CD8-positive, alpha-beta T cell (primary cell): ENCODE measurements at regions of chrX and their contacts with region 1.

Region 1: DNA sequence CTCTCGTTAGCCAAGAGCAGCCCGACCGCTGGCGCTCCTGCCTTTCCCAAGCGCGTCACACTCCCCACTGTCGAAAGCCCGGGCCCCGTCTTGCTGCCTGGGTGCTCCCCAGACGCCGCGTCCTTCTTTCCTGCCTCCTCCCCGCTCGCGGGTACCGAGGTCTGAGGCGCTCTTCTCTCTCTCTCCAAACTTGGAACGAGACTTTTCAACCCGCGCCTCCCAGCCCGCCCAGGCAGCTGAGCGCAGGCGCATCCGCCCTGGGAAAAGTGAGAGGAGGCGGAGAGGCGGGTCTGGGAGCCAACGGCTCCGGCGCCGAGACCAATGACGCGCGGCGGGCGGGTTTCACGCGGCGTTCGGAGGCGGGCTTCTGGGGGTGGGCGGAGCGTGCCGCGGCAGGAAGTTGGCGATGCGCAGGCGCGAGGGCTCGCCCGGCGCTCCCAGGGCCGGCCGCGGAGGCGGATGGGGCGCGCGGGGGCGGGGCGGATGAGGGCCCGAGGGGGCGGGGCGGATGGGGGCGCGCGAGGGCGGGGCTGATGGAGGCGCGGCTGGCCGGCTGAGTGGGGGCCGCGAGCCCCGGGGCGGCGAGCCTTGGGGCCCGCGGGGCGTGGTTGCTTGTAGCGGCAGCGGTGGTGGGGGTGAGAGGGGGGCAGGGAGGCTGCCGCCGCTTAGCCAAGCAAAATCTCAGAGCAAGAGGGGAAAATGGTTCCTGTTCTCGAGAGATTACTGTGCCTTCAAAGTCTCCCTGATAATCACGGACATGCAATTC is at the start of gene RBBP7:
- DNase-seq: peak; percentile 83 to 97 (median 89)
- ATAC-seq: peak; percentile 80
- H3K4me3 ChIP-seq: peak within 1 kb of the TSS; percentile 73 to 82
- H3K4me3 Mint-ChIP-seq: peak within 1 kb of the TSS; percentile 94
- H3K27ac ChIP-seq: peak within 1 kb of the TSS; percentile 91 to 97
- H3K27ac Mint-ChIP-seq: peak within 1 kb of the TSS; percentile 97
- H3K4me1 ChIP-seq: peaks cover 20% of the 10 kb centered on the region
- H3K4me1 Mint-ChIP-seq: peaks cover 42% of the 10 kb centered on the region
- H3K27me3 ChIP-seq: no peaks in the 10 kb centered on the region
- H3K27me3 Mint-ChIP-seq: no peaks in the 10 kb centered on the region
- CTCF ChIP-seq: no peak
- total RNA-seq, gene RBBP7: 130 to 131 TPM

Region 2: GRCh38 chrX:14872851-14873675 is 1997.2 kb before region 1 on chrX and contains the starts of genes FANCB and MOSPD2:
- CTCF ChIA-PET with region 1: no interaction called
- POLR2A ChIA-PET with region 1: no interaction called
- intact Hi-C with region 1: loop called (anchors 5 to 10 kb)
- DNase-seq: peak; percentile 85 to 97 (median 92)
- ATAC-seq: peak; percentile 89
- H3K4me3 ChIP-seq: peak within 1 kb of the TSS; percentile 81 to 83
- H3K4me3 Mint-ChIP-seq: peak within 1 kb of the TSS; percentile 84
- H3K27ac ChIP-seq: peak within 1 kb of the TSS; percentile 79 to 86
- H3K27ac Mint-ChIP-seq: peak within 1 kb of the TSS; percentile 92
- H3K4me1 ChIP-seq: peaks cover 9% of the 10 kb centered on the region
- H3K4me1 Mint-ChIP-seq: peaks cover 21% of the 10 kb centered on the region
- H3K27me3 ChIP-seq: no peaks in the 10 kb centered on the region
- H3K27me3 Mint-ChIP-seq: no peaks in the 10 kb centered on the region
- CTCF ChIP-seq: no peak
- total RNA-seq, gene FANCB: 2.5 to 3.1 TPM
- total RNA-seq, gene MOSPD2: 4.2 to 4.6 TPM

Region 3: DNA sequence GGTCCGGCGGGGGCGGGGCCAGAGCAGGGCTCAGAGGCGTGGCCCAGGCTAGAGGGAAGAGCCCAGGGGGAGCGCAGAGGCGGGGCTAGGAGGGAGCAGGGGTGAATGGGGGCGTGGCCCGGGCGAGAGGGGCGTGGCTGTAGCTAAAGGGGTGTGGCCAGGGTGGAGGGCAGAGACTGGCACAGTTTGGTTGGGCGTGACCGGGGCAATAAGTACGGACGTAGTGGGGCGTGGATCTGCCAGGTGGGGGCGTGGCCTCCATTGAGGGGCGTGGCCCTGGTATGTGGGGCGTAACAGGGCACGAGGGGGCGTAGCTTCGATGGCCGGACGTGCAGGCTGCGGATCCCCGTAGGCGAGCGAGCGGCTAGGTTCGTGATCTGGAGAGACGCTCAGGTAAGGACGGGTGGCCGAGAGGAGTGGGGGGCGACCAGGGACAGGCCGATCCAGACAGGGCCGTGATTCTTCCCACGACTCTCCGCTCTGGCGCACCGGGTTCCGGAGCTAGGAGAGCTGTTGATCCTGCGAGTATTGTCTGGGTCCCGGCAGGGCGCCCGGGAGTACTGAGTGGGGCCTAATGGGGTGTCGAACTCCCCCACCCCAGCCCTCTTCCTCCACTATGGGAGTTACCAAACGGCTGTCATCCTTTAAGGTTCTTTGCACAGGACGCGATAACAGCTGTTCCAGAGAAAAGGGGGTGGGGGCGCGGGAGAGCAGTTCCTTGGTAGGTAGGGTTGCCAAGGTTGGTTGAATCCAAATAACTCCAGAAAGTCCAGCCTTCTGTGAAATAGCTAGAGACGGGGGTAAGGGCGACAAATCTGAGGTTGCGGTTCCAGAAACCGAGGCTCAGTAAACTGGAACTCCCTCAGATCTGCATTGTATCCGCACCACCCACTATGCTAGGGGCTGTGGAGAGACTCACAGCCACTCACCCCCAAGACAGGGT is 1132.0 kb before region 1 on chrX and contains the start of gene CA5B:
- CTCF ChIA-PET with region 1: no interaction called
- POLR2A ChIA-PET with region 1: no interaction called
- intact Hi-C with region 1: loop called in 1 of 2 experiments (anchors 2 kb)
- DNase-seq: peak; percentile 93 to 100 (median 96)
- ATAC-seq: peak; percentile 96
- H3K4me3 ChIP-seq: peak within 1 kb of the TSS; percentile 84 to 85
- H3K4me3 Mint-ChIP-seq: peak within 1 kb of the TSS; percentile 94
- H3K27ac ChIP-seq: peak within 1 kb of the TSS; percentile 76 to 81
- H3K27ac Mint-ChIP-seq: peak within 1 kb of the TSS; percentile 92
- H3K4me1 ChIP-seq: peaks cover 23% of the 10 kb centered on the region
- H3K4me1 Mint-ChIP-seq: peaks cover 41% of the 10 kb centered on the region
- H3K27me3 ChIP-seq: no peaks in the 10 kb centered on the region
- H3K27me3 Mint-ChIP-seq: no peaks in the 10 kb centered on the region
- CTCF ChIP-seq: no peak
- total RNA-seq, gene CA5B: 33.9 to 35.2 TPM

Region 4: GRCh38 chrX:16719334-16720084 is 150.8 kb before region 1 on chrX and contains the start of gene SYAP1:
- CTCF ChIA-PET with region 1: no interaction called
- POLR2A ChIA-PET with region 1: no interaction called
- intact Hi-C with region 1: loop called (anchors 5 to 10 kb)
- DNase-seq: peak; percentile 84 to 99 (median 91)
- ATAC-seq: peak; percentile 84
- H3K4me3 ChIP-seq: peak within 1 kb of the TSS; percentile 61 to 87
- H3K4me3 Mint-ChIP-seq: peak within 1 kb of the TSS; percentile 91
- H3K27ac ChIP-seq: peak within 1 kb of the TSS; percentile 95 to 98
- H3K27ac Mint-ChIP-seq: peak within 1 kb of the TSS; percentile 99
- H3K4me1 ChIP-seq: peaks cover 17% of the 10 kb centered on the region
- H3K4me1 Mint-ChIP-seq: peaks cover 34% of the 10 kb centered on the region
- H3K27me3 ChIP-seq: no peaks in the 10 kb centered on the region
- H3K27me3 Mint-ChIP-seq: no peaks in the 10 kb centered on the region
- CTCF ChIP-seq: no peak
- total RNA-seq, gene SYAP1: 71.1 to 76.5 TPM

Region 5: GRCh38 chrX:16786139-16786790 is 84.0 kb before region 1 on chrX and contains the start of gene TXLNG:
- CTCF ChIA-PET with region 1: no interaction called
- POLR2A ChIA-PET with region 1: no interaction called
- intact Hi-C with region 1: loop called (anchors 1 to 5 kb)
- DNase-seq: peak; percentile 83 to 98 (median 94)
- ATAC-seq: peak; percentile 91
- H3K4me3 ChIP-seq: peak within 1 kb of the TSS; percentile 54 to 68
- H3K4me3 Mint-ChIP-seq: peak within 1 kb of the TSS; percentile 96
- H3K27ac ChIP-seq: peak within 1 kb of the TSS; percentile 88 to 91
- H3K27ac Mint-ChIP-seq: peak within 1 kb of the TSS; percentile 87
- H3K4me1 ChIP-seq: peaks cover 4% of the 10 kb centered on the region
- H3K4me1 Mint-ChIP-seq: peaks cover 25% of the 10 kb centered on the region
- H3K27me3 ChIP-seq: no peaks in the 10 kb centered on the region
- H3K27me3 Mint-ChIP-seq: no peaks in the 10 kb centered on the region
- CTCF ChIP-seq: no peak
- total RNA-seq, gene TXLNG: 31.3 to 32.3 TPM

Region 6: DNA sequence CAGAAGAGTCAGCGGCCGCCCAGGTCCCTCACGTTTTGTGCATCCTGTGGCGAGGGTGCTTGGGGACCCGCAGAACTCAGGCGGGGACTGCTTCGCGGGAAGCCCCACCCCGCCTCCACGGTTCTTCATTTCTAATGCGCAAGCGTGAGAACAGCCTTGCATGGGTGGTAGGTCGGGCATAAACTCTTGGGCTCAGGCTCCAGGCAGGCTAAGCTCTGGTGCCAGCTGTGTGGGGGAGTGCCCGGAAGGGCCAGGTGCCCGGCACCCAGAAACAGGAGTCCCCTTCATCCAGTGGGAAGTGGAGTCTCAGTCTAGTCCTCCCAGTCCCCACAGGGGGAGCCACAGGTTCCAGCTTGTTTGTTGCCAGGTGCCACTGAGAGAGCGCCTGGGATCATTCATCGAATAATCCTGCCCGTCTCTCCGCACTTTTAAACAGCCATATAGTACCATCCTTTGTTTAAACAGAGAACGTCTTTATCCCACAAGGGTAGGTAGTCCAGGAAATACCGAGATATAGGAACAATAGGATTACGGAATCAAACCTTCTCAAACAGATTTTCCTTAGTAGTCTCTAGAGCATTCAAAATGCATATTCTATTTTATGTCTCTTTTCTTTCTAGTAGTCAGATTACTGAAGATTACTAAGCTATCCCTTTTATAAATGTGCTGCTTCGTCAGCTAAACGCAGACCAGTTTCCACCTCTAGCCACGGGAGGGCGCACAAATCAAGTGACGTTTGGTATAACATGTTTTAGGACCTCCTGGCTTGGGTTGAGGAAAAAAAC is 12.6 kb after region 1 on chrX:
- CTCF ChIA-PET with region 1: interaction called, 22 read pairs
- POLR2A ChIA-PET with region 1: interaction called, 6 read pairs
- intact Hi-C with region 1: loop called in 1 of 2 experiments (anchors 1 kb)
- DNase-seq: peak; percentile 44 to 79 (median 71)
- ATAC-seq: peak; percentile 81
- H3K4me3 ChIP-seq: peak overlapping the region; percentile 56 to 72
- H3K4me3 Mint-ChIP-seq: peak overlapping the region; percentile 79
- H3K27ac ChIP-seq: peak overlapping the region; percentile 45 to 66
- H3K27ac Mint-ChIP-seq: peak overlapping the region; percentile 83
- H3K4me1 ChIP-seq: peaks cover 3% of the 10 kb centered on the region
- H3K4me1 Mint-ChIP-seq: peaks cover 9% of the 10 kb centered on the region
- H3K27me3 ChIP-seq: no peaks in the 10 kb centered on the region
- H3K27me3 Mint-ChIP-seq: no peaks in the 10 kb centered on the region
- CTCF ChIP-seq: peak; percentile 70

Region 7: DNA sequence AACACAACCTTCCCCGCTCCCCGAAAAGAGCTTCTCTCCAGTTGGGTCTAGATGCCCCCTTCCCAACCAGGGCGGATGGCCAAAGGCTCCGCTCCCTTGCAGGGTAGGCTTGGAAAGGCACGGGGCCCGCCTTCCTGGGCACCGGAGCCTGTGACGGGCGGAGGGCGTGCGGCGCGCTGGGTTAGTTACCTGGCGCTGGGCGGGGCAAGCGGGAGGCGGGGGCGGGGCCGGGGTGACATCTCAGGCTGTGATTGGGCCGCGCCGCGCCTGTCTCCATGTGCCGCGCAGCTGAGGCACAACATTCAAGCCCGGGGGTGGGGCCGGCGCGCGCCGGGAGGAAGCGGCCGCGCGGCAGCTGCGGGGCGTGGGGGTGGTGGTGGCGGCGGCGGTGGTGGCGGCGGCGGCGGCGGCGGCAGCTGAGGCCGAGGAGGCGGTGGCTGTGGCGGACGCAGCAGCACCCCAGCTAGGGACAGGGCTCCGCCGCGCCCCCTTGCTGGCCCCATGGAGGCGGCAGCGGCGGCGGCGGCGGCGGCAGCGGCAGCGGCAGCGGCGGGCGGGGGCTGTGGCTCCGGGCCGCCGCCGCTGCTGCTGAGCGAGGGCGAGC is 76.2 kb after region 1 on chrX and contains the start of gene REPS2:
- CTCF ChIA-PET with region 1: no interaction called
- POLR2A ChIA-PET with region 1: no interaction called
- intact Hi-C with region 1: loop called (anchors 2 to 5 kb)
- DNase-seq: peak; percentile 58 to 87 (median 75)
- ATAC-seq: peak; percentile 97
- H3K4me3 ChIP-seq: peak within 1 kb of the TSS; percentile 46 to 54
- H3K4me3 Mint-ChIP-seq: peak within 1 kb of the TSS; percentile 81
- H3K27ac ChIP-seq: peak within 1 kb of the TSS in 1 of 2 experiments; percentile 33
- H3K27ac Mint-ChIP-seq: no peak within 1 kb of the TSS
- H3K4me1 ChIP-seq: peaks cover 3% of the 10 kb centered on the region
- H3K4me1 Mint-ChIP-seq: peaks cover 7% of the 10 kb centered on the region
- H3K27me3 ChIP-seq: no peaks in the 10 kb centered on the region
- H3K27me3 Mint-ChIP-seq: peaks cover 10% of the 10 kb centered on the region
- CTCF ChIP-seq: no peak
- total RNA-seq, gene REPS2: 0.11 TPM in 1 of 2 experiments, not detected in the other

Region 8: DNA sequence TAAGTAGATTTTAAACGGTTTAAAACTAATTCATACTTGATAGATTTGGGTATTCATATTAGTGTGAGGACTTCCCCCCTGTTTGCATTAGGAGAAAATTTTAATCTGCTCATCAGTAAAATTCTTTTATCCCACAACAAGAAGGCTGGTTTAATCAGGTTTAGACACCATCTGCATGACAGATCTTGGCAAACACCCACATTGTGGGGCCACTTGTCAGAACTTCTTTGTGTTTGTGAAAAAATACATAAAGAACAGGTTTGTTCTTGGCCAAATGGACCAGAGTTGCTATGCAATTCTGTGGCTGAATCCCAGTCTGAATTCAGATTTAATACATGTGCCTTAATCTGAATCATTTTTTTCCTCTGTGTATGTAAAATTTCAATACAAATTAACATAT is 197.3 kb after region 1 on chrX:
- CTCF ChIA-PET with region 1: no interaction called
- POLR2A ChIA-PET with region 1: no interaction called
- intact Hi-C with region 1: no loop called
- DNase-seq: no peak
- ATAC-seq: no peak
- H3K4me3 ChIP-seq: no peak overlapping the region
- H3K4me3 Mint-ChIP-seq: no peak overlapping the region
- H3K27ac ChIP-seq: no peak overlapping the region
- H3K27ac Mint-ChIP-seq: no peak overlapping the region
- H3K4me1 ChIP-seq: no peaks in the 10 kb centered on the region
- H3K4me1 Mint-ChIP-seq: no peaks in the 10 kb centered on the region
- H3K27me3 ChIP-seq: no peaks in the 10 kb centered on the region
- H3K27me3 Mint-ChIP-seq: no peaks in the 10 kb centered on the region
- CTCF ChIP-seq: no peak

Region 9: GRCh38 chrX:17750436-17750835 is 880.2 kb after region 1 on chrX:
- CTCF ChIA-PET with region 1: no interaction called
- POLR2A ChIA-PET with region 1: no interaction called
- intact Hi-C with region 1: no loop called
- DNase-seq: no peak
- ATAC-seq: no peak
- H3K4me3 ChIP-seq: no peak overlapping the region
- H3K4me3 Mint-ChIP-seq: no peak overlapping the region
- H3K27ac ChIP-seq: no peak overlapping the region
- H3K27ac Mint-ChIP-seq: no peak overlapping the region
- H3K4me1 ChIP-seq: no peaks in the 10 kb centered on the region
- H3K4me1 Mint-ChIP-seq: peaks cover 6% of the 10 kb centered on the region
- H3K27me3 ChIP-seq: no peaks in the 10 kb centered on the region
- H3K27me3 Mint-ChIP-seq: no peaks in the 10 kb centered on the region
- CTCF ChIP-seq: no peak